Sigmoid colon (tissue), 7 donors: ENCODE measurements at regions of chr4 and their contacts with region 1.

Region 1: GRCh38 chr4:55321707-55322264 is 24.3 kb upstream of the SRD5A3 start:
- DNase-seq: peak; percentile 76
- H3K4me3 ChIP-seq: no peak overlapping the region
- H3K27ac ChIP-seq: no peak overlapping the region
- H3K4me1 ChIP-seq: no peaks in the 10 kb centered on the region
- H3K27me3 ChIP-seq: no peaks in the 10 kb centered on the region
- CTCF ChIP-seq: peak in 3 of 4 experiments; percentile 9 to 39 (median 36)
- EP300 ChIP-seq: no peak
- POLR2A ChIP-seq: no peak

Region 2: DNA sequence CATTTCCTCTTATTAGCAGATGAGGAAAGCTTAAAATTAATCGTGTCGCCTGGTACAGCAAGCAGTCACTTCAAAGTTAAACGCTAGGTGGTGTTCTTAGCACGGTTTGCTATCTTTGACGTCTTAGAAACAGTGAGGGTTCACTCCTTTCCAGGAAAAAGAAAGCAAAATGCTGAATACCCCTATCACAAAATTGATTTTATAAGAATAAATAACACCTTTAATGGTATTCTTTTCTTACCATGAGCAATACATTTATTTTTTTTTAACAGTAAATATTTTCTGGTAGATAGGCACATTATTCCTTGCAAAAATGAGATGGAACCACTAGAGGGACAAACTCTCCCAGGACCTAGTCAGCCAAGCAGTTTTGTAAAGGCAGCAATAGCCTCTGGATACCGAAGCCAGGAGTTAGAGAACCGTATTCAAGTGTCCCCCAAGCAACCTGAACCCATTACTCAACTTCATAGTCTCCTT is 350.3 kb before region 1 on chr4:
- intact Hi-C with region 1: loop called (anchors 5 kb)
- DNase-seq: no peak
- H3K4me3 ChIP-seq: no peak overlapping the region
- H3K27ac ChIP-seq: no peak overlapping the region
- H3K4me1 ChIP-seq: no peaks in the 10 kb centered on the region
- H3K27me3 ChIP-seq: no peaks in the 10 kb centered on the region
- CTCF ChIP-seq: peak in 3 of 4 experiments; percentile 20 to 37 (median 36)
- EP300 ChIP-seq: no peak
- POLR2A ChIP-seq: no peak